Calu3 (cell line): ENCODE measurements at regions of chr1 and their contacts with region 1.

Region 1: DNA sequence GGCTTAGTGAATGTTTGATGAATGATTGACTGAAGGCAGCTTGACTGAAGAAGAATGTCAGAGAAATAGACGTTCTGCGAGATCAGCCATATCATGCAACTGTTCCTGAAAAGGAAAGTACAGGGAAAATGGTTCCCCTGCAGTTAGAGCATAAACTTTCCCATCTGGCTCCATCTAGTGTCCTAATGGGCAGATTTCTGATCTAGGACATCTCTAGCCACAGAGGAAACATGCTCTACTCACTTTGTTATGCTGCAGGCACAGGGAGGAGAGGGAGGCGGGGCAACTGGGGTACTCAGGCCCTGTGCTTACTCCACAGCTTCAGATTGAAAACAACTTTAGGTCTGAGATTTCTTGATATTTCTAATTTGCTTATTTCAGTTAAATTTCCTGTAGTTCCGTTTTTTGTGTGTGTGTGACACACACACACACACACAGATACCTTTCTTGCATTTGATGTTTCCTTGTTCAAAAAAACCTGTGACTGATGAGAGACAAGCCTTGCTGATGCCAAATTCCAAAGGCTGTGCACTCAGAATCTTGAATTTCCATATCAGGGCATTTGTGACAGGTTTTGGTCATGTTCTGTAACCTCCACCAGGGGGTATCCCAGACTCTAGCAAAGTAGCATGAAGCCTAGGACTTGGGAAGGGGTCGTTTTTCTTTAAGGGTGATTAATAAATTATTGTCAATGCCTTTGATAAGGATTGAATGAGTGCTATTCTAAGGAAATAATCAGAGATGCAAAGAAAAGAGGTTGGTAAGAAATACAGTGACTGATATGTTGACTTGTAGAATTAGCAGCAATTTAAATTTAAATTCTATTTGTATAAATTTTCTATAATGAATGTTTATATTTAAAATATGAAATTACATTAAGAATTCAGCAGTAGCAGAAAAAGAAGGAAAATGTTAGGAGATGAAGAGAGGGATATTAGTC is 139.7 kb upstream of the BEND5 start:
- DNase-seq: peak; percentile 53
- H3K4me3 Mint-ChIP-seq: no peak overlapping the region
- H3K27ac Mint-ChIP-seq: peak overlapping the region; percentile 5
- H3K4me1 Mint-ChIP-seq: peaks cover 17% of the 10 kb centered on the region
- H3K27me3 Mint-ChIP-seq: no peaks in the 10 kb centered on the region
- CTCF ChIP-seq: peak; percentile 46

Region 2: GRCh38 chr1:48572646-48573261 is 343.6 kb before region 1 on chr1:
- CTCF ChIA-PET with region 1: no interaction called
- intact Hi-C with region 1: loop called (anchors 1 kb)
- DNase-seq: peak; percentile 62
- H3K4me3 Mint-ChIP-seq: no peak overlapping the region
- H3K27ac Mint-ChIP-seq: no peak overlapping the region
- H3K4me1 Mint-ChIP-seq: no peaks in the 10 kb centered on the region
- H3K27me3 Mint-ChIP-seq: peaks cover 71% of the 10 kb centered on the region
- CTCF ChIP-seq: peak; percentile 70

Region 3: GRCh38 chr1:48741395-48741794 is 175.0 kb before region 1 on chr1:
- CTCF ChIA-PET with region 1: no interaction called
- intact Hi-C with region 1: no loop called
- DNase-seq: no peak
- H3K4me3 Mint-ChIP-seq: no peak overlapping the region
- H3K27ac Mint-ChIP-seq: no peak overlapping the region
- H3K4me1 Mint-ChIP-seq: no peaks in the 10 kb centered on the region
- H3K27me3 Mint-ChIP-seq: peaks cover 5% of the 10 kb centered on the region
- CTCF ChIP-seq: no peak

Region 4: DNA sequence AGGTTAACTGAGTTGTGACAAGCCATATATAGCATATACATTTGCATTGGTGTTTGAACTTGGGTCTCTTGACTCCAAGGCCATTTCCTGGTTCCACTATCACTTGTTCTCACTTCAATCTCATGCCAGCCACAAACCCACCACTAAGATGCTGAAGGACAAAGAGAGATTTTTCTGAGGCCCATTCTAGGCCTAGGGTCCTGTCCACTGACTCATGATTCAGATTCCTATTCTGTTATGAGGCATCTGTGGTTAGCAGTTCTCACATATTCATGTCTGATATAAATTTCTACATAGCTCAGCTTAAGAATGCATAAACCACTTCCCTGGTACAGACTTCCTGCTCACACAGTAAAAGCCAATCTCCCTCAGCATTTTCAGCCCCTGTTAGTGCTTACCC is 186.4 kb after region 1 on chr1:
- CTCF ChIA-PET with region 1: no interaction called
- intact Hi-C with region 1: loop called (anchors 5 kb)
- DNase-seq: peak; percentile 41
- H3K4me3 Mint-ChIP-seq: no peak overlapping the region
- H3K27ac Mint-ChIP-seq: peak overlapping the region; percentile 82
- H3K4me1 Mint-ChIP-seq: peaks cover 57% of the 10 kb centered on the region
- H3K27me3 Mint-ChIP-seq: no peaks in the 10 kb centered on the region
- CTCF ChIP-seq: no peak

Region 5: DNA sequence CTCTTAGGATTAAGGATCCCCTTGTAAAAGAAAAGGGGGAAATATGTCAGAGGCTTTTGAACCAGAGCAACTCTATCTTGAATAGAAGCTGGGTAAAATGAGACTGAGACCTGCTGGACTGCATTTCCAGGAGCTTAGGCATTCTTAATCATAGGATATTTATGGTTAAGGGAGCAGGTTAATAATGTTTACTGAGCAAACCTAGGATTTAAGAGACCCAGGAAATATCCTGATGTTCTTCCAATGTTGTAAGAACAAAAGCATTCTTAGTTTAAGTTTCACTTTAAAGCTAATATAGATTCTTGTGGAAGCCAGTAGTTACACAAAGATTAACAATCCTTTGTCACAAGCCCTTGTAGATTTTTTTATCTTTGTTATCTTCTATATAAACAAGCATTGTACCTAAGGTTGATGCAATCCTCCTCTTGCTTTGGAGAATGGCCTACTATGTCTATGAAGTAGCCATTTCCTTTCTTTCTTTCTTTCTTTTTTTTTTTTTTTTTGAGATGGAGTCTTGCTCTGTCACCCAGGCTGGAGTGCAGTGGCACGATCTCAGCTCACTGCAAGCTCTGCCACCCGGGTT is 430.5 kb after region 1 on chr1:
- CTCF ChIA-PET with region 1: no interaction called
- intact Hi-C with region 1: loop called (anchors 2 kb)
- DNase-seq: peak; percentile 41
- H3K4me3 Mint-ChIP-seq: no peak overlapping the region
- H3K27ac Mint-ChIP-seq: peak overlapping the region; percentile 85
- H3K4me1 Mint-ChIP-seq: peaks cover 48% of the 10 kb centered on the region
- H3K27me3 Mint-ChIP-seq: no peaks in the 10 kb centered on the region
- CTCF ChIP-seq: no peak

Region 6: DNA sequence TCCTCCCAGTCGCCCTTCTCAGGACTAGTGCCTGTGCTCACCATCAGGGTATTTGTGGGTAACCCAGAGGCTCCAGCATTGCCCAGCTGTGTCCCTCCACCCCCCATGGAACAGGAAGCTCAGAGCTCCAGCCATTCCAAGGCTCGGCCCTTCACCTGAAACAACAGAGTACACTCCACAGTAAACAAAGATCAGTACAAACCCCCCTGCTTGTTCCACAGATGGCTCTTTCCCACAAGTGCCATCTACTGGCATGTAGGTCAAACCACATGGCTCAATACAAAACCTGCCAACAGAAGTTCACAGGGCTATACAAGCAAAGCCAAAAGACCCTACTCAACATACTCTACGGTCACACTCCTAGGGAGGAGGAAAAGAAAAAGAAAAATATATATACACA is 848.6 kb after region 1 on chr1:
- CTCF ChIA-PET with region 1: no interaction called
- intact Hi-C with region 1: loop called (anchors 5 kb)
- DNase-seq: peak; percentile 22
- H3K4me3 Mint-ChIP-seq: no peak overlapping the region
- H3K27ac Mint-ChIP-seq: no peak overlapping the region
- H3K4me1 Mint-ChIP-seq: peaks cover 10% of the 10 kb centered on the region
- H3K27me3 Mint-ChIP-seq: no peaks in the 10 kb centered on the region
- CTCF ChIP-seq: peak; percentile 50